GM13977 (cell line): ENCODE measurements at regions of chr2 and their contacts with region 1.

Region 1: GRCh38 chr2:218406209-218406948 is 6.7 kb downstream of the CTDSP1 start:
- DNase-seq: peak; percentile 96
- CTCF ChIP-seq: peak; percentile 90

Region 2: GRCh38 chr2:218648088-218648786 is 241.9 kb after region 1 on chr2:
- in situ Hi-C with region 1: loop called (anchors 10 kb)
- DNase-seq: peak; percentile 70
- CTCF ChIP-seq: peak; percentile 89

Region 3: DNA sequence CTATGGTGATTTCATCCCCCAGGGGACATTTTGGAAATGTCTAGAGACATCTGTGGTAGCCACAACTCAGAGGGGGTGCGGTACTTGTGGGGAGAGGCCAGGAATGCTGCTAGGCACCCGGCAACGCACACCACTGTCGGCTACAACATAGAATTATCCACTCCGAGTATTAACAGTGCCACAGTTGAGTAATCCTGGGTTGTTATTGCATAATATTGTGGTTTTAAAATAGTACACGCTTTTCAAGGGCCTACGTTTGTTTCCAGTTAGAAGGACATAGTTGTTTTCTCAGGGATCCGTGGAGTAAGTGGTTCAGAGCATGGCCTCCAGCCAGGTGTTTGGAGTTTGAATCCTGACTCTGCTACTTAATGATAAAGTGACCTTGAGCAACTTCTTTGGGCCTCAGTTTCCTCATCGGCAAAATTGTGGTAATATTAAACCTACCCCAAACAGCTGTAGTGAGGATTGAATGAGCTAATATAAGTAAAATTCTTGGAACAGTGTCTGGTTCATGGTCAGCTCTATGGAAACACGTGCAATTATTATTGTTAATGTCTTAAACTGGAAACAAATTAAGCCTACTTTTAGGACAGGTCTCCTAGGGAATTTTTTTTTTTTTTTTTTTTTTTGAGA is 400.1 kb after region 1 on chr2:
- in situ Hi-C with region 1: no loop called
- DNase-seq: no peak
- CTCF ChIP-seq: no peak

Region 4: GRCh38 chr2:218832520-218832919 is 426.1 kb after region 1 on chr2:
- in situ Hi-C with region 1: loop called (anchors 25 kb)
- DNase-seq: no peak
- CTCF ChIP-seq: no peak